ENCODE measurements at regions of chr20 and their contacts with region 1.

Region 1: GRCh38 chr20:44866703-44867335 is 18.7 kb upstream of the YWHAB start:
- DNase-seq: peak; percentile 9
- H3K4me3 ChIP-seq: no peak overlapping the region
- H3K27ac ChIP-seq: no peak overlapping the region
- H3K4me1 ChIP-seq: no peaks in the 10 kb centered on the region
- H3K27me3 ChIP-seq: peaks cover 3% of the 10 kb centered on the region
- CTCF ChIP-seq: no peak

Region 2: GRCh38 chr20:44683263-44684046 is 183.4 kb before region 1 on chr20:
- CTCF ChIA-PET with region 1: no interaction called
- dilution Hi-C with region 1: no loop called
- in situ Hi-C with region 1: loop called (anchors 5 to 10 kb)
- intact Hi-C with region 1: loop called (anchors 1 kb)
- DNase-seq: peak; percentile 58
- H3K4me3 ChIP-seq: no peak overlapping the region
- H3K27ac ChIP-seq: no peak overlapping the region
- H3K4me1 ChIP-seq: peaks cover 8% of the 10 kb centered on the region
- H3K27me3 ChIP-seq: no peaks in the 10 kb centered on the region
- CTCF ChIP-seq: peak; percentile 63 to 84

Region 3: GRCh38 chr20:44733341-44734069 is 133.3 kb before region 1 on chr20:
- CTCF ChIA-PET with region 1: no interaction called
- dilution Hi-C with region 1: loop called (anchors 5 kb)
- in situ Hi-C with region 1: no loop called
- intact Hi-C with region 1: loop called (anchors 1 kb)
- DNase-seq: peak; percentile 57
- H3K4me3 ChIP-seq: no peak overlapping the region
- H3K27ac ChIP-seq: no peak overlapping the region
- H3K4me1 ChIP-seq: peaks cover 32% of the 10 kb centered on the region
- H3K27me3 ChIP-seq: no peaks in the 10 kb centered on the region
- CTCF ChIP-seq: peak; percentile 88 to 92

Region 4: DNA sequence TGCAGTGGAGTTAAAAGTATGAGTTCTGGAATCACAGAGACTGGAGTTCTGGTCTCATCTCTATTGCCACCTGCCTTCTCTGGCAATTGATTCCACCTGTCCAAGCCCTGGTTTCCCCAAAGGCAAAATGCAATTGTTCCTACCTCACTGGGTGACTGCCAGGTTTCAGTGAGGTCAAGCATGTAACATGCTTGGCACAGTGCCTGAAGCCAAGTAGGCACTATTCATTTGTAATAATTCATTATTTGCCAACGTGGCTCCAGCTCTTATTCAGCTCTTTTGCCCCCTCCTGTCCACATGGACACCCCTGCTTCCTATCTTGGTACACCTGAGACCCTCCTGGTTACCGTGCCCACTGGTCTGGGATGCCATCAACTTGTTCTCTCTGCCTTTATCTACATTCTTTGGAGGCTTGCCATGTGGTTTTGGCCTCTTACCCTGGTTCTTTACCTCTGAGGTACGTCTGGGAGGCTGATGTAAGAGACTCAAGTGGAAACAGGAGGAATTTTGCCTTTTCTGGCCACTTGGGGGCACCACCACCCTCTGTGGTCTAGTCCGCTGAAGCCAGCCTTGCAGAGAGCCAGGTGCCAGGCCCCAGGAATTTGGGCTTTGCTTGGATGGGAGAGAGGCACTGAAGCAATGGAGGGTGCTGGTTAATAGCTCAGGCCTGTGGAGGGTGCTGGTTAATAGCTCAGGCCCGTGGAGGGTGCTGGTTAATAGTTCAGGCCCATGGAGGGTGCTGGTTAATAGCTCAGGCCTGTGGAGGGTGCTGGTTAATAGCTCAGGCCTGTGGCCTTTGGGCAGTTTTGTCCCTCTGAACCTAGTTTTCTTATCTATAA is 119.4 kb before region 1 on chr20:
- CTCF ChIA-PET with region 1: interaction called, 5 read pairs
- dilution Hi-C with region 1: no loop called
- in situ Hi-C with region 1: loop called (anchors 5 to 10 kb)
- intact Hi-C with region 1: loop called (anchors 1 kb)
- DNase-seq: peak; percentile 87
- H3K4me3 ChIP-seq: no peak overlapping the region
- H3K27ac ChIP-seq: no peak overlapping the region
- H3K4me1 ChIP-seq: peaks cover 18% of the 10 kb centered on the region
- H3K27me3 ChIP-seq: peaks cover 7% of the 10 kb centered on the region
- CTCF ChIP-seq: peak; percentile 77 to 79

Region 5: GRCh38 chr20:44785769-44786168 is 81.0 kb before region 1 on chr20:
- CTCF ChIA-PET with region 1: no interaction called
- dilution Hi-C with region 1: no loop called
- in situ Hi-C with region 1: no loop called
- intact Hi-C with region 1: loop called (anchors 1 kb)
- DNase-seq: peak; percentile 35
- H3K4me3 ChIP-seq: no peak overlapping the region
- H3K27ac ChIP-seq: no peak overlapping the region
- H3K4me1 ChIP-seq: peaks cover 2% of the 10 kb centered on the region
- H3K27me3 ChIP-seq: peaks cover 2% of the 10 kb centered on the region
- CTCF ChIP-seq: peak in 1 of 2 donors; percentile 39

Region 6: GRCh38 chr20:44896583-44896982 is 29.8 kb after region 1 on chr20:
- CTCF ChIA-PET with region 1: no interaction called
- dilution Hi-C with region 1: no loop called
- in situ Hi-C with region 1: no loop called
- intact Hi-C with region 1: no loop called
- DNase-seq: no peak
- H3K4me3 ChIP-seq: no peak overlapping the region
- H3K27ac ChIP-seq: no peak overlapping the region
- H3K4me1 ChIP-seq: peaks cover 3% of the 10 kb centered on the region
- H3K27me3 ChIP-seq: no peaks in the 10 kb centered on the region
- CTCF ChIP-seq: no peak